CD8-positive, alpha-beta T cell (primary cell): ENCODE measurements at regions of chr16 and their contacts with region 1.

Region 1: GRCh38 chr16:23924128-23924527 is 88.3 kb downstream of the PRKCB start:
- DNase-seq: peak in 1 of 9 experiments; percentile 18
- ATAC-seq: no peak
- H3K4me3 ChIP-seq: no peak overlapping the region
- H3K4me3 Mint-ChIP-seq: no peak overlapping the region
- H3K27ac ChIP-seq: no peak overlapping the region
- H3K27ac Mint-ChIP-seq: no peak overlapping the region
- H3K4me1 ChIP-seq: peaks cover 14% of the 10 kb centered on the region
- H3K4me1 Mint-ChIP-seq: peaks cover 64% of the 10 kb centered on the region
- H3K27me3 ChIP-seq: no peaks in the 10 kb centered on the region
- H3K27me3 Mint-ChIP-seq: no peaks in the 10 kb centered on the region
- CTCF ChIP-seq: no peak

Region 2: DNA sequence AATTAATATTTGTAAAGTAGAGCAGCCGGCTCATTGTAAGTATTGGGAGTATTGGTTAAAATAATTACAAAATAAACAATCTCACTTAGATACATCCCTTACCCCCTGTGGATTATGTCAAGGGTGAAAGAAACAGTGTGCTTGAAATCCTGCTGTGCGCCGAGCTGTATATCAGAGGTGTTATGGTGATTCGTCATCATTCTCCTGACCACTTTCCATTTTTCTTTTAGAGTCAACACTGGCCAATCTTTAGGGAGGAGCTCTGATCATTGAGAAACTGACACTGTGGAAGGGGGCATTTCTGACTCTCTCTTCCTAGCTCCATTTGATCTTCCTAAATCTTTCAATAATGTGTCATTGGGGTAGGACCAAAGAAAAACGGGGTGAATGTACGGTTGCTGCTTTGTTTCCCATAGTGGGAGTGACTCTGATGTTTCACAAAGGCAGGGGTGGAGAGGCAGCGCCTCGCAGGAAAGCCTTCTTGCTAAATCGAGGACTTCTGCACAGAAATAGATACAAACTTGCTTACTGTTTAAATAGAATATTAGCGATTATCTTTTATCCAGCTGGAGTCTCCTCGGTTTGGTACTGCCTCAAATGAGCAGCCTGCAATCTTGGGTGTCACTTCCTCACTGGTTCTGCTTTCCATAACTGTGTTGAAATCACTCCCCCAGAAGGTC is 35.1 kb after region 1 on chr16:
- CTCF ChIA-PET with region 1: no interaction called
- POLR2A ChIA-PET with region 1: no interaction called
- intact Hi-C with region 1: loop called in 1 of 2 experiments (anchors 5 kb)
- DNase-seq: no peak
- ATAC-seq: no peak
- H3K4me3 ChIP-seq: no peak overlapping the region
- H3K4me3 Mint-ChIP-seq: peak overlapping the region; percentile 69
- H3K27ac ChIP-seq: no peak overlapping the region
- H3K27ac Mint-ChIP-seq: peak overlapping the region; percentile 88
- H3K4me1 ChIP-seq: peaks cover 45% of the 10 kb centered on the region
- H3K4me1 Mint-ChIP-seq: peaks cover 80% of the 10 kb centered on the region
- H3K27me3 ChIP-seq: no peaks in the 10 kb centered on the region
- H3K27me3 Mint-ChIP-seq: no peaks in the 10 kb centered on the region
- CTCF ChIP-seq: no peak